Ascending aorta (tissue), 2 donors: ENCODE measurements at regions of chr11 and their contacts with region 1.

Region 1: DNA sequence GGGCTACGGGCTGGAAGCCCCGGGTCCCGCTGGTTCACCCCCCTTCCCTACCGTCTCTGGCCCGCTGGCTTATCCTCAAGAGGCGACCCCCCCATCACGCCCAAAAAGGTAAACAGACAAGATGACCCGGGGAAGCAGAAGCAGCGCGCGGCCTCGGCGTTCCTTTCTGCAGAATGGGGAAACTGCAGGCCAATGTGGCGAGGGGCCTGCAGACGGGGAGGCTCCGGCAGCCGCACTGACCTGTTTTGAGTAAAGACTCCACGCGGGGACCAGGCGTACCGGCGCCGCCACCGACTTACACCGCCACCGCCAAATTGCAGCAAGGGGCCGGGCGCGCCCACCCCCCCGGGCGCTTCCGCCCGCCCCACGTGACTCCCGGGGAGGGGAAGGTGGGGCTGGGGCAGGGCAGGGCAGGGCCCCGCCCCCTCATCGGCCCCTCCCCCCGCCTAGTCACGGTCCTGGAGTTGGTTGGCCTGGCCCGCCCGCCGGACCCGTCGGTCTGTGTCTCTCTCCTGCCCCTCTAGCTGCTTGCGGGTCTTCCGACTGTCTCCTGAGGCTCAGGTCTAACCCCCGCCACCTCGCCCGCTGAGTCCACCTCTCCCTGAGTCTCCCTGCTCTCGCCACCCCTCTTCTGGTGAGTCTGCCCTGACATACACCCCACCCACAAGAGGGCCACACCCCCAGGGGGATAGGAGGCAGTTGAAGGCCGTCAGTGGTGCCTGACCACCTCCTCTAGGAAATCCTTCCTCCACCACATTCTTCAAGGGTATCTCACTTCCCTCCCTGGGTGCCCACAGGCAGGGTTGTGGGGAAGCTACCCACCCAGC is at the start of gene ARAP1:
- DNase-seq: peak in 1 of 2 donors; percentile 86
- H3K4me3 ChIP-seq: peak within 1 kb of the TSS; percentile 68 to 72
- H3K27ac ChIP-seq: peak within 1 kb of the TSS; percentile 34 to 43
- H3K4me1 ChIP-seq: peaks cover 6 to 15% of the 10 kb centered on the region in 2 donors
- H3K27me3 ChIP-seq: no peaks in the 10 kb centered on the region
- CTCF ChIP-seq: no peak
- total RNA-seq, gene ARAP1: 238 TPM

Region 2: GRCh38 chr11:72814286-72815109 is 62.2 kb after region 1 on chr11 and contains the start of gene ATG16L2:
- intact Hi-C with region 1: loop called (anchors 1 kb)
- DNase-seq: peak in 1 of 2 donors; percentile 85
- H3K4me3 ChIP-seq: peak within 1 kb of the TSS; percentile 81 to 85
- H3K27ac ChIP-seq: peak within 1 kb of the TSS; percentile 92 to 96
- H3K4me1 ChIP-seq: peaks cover 10 to 29% of the 10 kb centered on the region in 2 donors
- H3K27me3 ChIP-seq: no peaks in the 10 kb centered on the region
- CTCF ChIP-seq: peak; percentile 7 to 61 (median 22)
- total RNA-seq, gene ATG16L2: 21.2 TPM